Naive thymus-derived CD4-positive, alpha-beta T cell (primary cell): ENCODE measurements at regions of chr2 and their contacts with region 1.

Region 1: DNA sequence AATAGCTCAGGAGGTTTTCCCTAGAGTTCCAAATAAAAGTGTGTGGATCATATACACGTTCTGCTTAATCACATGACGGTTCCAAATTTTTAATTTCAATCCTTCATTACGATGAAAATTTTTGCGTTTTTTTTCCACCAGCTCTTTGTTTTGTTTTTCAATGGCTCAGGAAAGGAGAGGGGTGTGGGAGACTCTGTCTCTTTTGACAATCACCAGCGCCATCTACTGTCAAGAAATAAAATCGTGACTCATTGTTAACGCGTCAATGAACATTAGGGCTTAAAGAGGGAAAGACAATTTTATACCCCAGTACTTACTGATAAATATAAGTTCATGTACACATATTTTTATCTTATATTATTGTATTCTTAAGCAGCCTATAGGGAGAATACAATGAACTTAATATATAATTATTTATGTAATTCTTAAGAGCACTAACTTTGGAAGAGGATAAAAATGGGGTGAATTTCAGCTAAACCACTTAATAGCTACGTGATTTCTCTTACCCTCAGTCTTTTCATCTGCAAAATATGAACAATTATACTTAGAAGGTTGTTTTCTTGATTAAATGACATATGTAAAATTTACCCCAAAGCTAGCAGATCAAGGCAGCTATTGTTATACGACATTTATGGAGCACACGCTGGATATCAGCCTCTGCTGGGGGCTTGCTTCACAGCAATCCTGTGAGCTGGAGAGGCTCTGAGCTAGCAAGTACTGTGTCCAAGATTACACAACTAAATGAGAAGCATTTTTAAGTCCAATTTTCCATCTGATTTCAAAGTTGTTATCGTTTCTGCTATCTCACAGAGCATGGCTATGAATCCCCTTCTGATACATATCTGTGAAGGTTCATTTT is 47.4 kb upstream of the RMDN2 start:
- DNase-seq: peak in 7 of 9 donors; percentile 15 to 60 (median 48)
- ATAC-seq: peak; percentile 81
- H3K4me3 ChIP-seq: no peak overlapping the region
- H3K4me3 Mint-ChIP-seq: no peak overlapping the region
- H3K27ac ChIP-seq: no peak overlapping the region
- H3K27ac Mint-ChIP-seq: no peak overlapping the region
- H3K4me1 ChIP-seq: no peaks in the 10 kb centered on the region
- H3K4me1 Mint-ChIP-seq: peaks cover 0 to 8% (median 0%) of the 10 kb centered on the region in 7 donors
- H3K27me3 ChIP-seq: no peaks in the 10 kb centered on the region
- H3K27me3 Mint-ChIP-seq: peaks cover 9 to 30% (median 18%) of the 10 kb centered on the region in 5 donors

Region 2: DNA sequence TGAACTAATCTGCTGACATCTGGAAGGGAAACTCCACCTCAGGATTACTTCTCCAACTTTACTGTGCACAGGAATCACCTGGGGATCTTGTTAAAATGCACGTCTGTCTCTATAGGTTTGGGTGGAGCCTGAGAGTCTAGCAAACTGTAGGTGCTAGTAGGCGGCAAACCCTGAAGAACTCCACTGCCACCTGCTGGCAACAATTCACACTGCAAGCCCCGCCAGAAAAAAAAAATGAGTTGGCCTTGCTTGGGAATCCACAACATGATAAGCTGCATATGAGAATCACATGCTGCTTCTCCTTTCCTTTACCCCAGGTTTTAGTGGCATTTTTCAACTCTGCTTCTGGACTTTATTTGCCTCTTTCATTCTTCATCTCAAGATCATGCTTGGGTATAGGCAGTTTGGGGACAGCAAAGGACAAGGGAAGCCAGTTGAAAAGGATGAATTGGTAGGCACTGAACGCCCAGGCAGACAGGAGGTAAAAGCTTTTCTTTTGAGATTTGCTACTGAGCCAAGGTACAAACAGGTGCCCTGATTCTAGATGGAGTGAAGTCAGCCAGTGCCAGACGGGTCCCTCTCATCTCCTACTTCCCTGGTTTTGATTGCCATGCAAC is 1092.4 kb before region 1 on chr2:
- CTCF ChIA-PET with region 1: interaction called, 3 read pairs
- POLR2A ChIA-PET with region 1: no interaction called
- intact Hi-C with region 1: loop called (anchors 1 to 5 kb)
- DNase-seq: peak; percentile 23 to 74 (median 61)
- ATAC-seq: peak; percentile 85
- H3K4me3 ChIP-seq: no peak overlapping the region
- H3K4me3 Mint-ChIP-seq: no peak overlapping the region
- H3K27ac ChIP-seq: no peak overlapping the region
- H3K27ac Mint-ChIP-seq: peak overlapping the region in 1 of 9 donors; percentile 43
- H3K4me1 ChIP-seq: no peaks in the 10 kb centered on the region
- H3K4me1 Mint-ChIP-seq: peaks cover 0 to 15% (median 2%) of the 10 kb centered on the region in 7 donors
- H3K27me3 ChIP-seq: no peaks in the 10 kb centered on the region
- H3K27me3 Mint-ChIP-seq: peaks cover 0 to 37% (median 5%) of the 10 kb centered on the region in 5 donors

Region 3: DNA sequence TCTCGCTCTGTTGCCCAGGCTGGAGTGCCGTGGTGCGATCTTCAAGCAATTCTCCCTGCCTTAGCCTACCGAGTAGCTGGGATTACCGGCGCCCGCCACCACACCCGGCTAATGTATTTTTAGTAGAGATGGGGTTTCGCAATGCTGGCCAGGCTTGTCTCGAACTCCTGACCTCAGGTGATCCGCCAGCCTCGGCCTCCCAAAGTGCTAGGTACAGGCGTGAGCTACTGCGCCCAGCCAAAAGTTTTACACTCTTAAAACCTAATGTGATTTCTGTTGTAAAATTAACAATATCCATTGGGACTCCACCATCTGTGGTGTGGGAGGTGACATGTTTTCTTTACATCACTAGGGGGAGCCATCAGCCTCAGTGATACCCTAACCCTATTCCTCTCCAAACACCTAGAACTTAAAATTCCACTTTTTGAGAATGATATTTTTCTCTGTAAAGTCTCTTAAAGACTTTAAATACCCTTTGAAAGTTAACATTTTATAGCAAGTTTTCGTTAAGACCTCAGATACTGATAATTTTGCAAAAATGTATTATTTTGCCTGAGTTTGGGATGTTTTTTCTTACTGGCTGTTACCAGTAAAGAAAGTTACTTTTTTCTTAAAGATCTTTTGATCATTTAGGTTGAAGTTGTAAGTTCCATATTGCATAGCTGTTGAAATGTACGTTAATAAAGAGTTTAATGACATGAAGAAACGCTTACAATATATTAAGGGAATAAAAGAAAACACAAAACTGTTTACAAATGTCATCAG is 709.3 kb before region 1 on chr2:
- CTCF ChIA-PET with region 1: interaction called, 6 read pairs
- POLR2A ChIA-PET with region 1: interaction called, 3 read pairs
- intact Hi-C with region 1: loop called (anchors 1 kb)
- DNase-seq: peak in 6 of 9 donors; percentile 14 to 52 (median 40)
- ATAC-seq: peak; percentile 80
- H3K4me3 ChIP-seq: no peak overlapping the region
- H3K4me3 Mint-ChIP-seq: no peak overlapping the region
- H3K27ac ChIP-seq: no peak overlapping the region
- H3K27ac Mint-ChIP-seq: peak overlapping the region in 1 of 9 donors; percentile 32
- H3K4me1 ChIP-seq: no peaks in the 10 kb centered on the region
- H3K4me1 Mint-ChIP-seq: no peaks in the 10 kb centered on the region
- H3K27me3 ChIP-seq: no peaks in the 10 kb centered on the region
- H3K27me3 Mint-ChIP-seq: peaks cover 0 to 3% (median 0%) of the 10 kb centered on the region in 5 donors

Region 4: DNA sequence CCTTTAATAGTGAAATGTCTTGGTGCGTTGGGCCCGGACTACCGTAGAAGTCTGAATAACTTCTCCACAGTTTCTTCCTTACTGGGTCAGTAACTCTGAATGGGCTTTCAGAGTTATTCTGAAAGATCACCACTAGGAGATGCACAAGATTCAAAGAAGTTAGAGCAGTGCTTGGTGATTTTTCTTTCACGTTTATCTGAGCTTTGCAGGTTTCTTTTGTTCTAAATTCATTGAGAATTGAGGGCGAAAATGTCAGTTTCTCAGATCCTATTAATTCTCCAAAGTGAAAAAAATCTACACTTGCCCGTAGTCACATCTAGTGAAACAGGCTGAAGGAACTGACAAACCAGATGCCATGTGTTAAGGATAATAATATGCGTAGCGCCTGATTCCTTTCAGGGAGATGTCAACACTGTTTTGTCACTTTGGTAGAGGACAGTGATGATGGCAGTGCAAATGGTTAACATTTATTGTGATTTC is 463.2 kb before region 1 on chr2:
- CTCF ChIA-PET with region 1: interaction called, 23 read pairs
- POLR2A ChIA-PET with region 1: no interaction called
- intact Hi-C with region 1: loop called (anchors 1 kb)
- DNase-seq: peak in 6 of 9 donors; percentile 28 to 63 (median 57)
- ATAC-seq: peak; percentile 85
- H3K4me3 ChIP-seq: no peak overlapping the region
- H3K4me3 Mint-ChIP-seq: no peak overlapping the region
- H3K27ac ChIP-seq: no peak overlapping the region
- H3K27ac Mint-ChIP-seq: no peak overlapping the region
- H3K4me1 ChIP-seq: no peaks in the 10 kb centered on the region
- H3K4me1 Mint-ChIP-seq: peaks cover 0 to 7% (median 5%) of the 10 kb centered on the region in 7 donors
- H3K27me3 ChIP-seq: no peaks in the 10 kb centered on the region
- H3K27me3 Mint-ChIP-seq: peaks cover 0 to 17% (median 0%) of the 10 kb centered on the region in 5 donors

Region 5: DNA sequence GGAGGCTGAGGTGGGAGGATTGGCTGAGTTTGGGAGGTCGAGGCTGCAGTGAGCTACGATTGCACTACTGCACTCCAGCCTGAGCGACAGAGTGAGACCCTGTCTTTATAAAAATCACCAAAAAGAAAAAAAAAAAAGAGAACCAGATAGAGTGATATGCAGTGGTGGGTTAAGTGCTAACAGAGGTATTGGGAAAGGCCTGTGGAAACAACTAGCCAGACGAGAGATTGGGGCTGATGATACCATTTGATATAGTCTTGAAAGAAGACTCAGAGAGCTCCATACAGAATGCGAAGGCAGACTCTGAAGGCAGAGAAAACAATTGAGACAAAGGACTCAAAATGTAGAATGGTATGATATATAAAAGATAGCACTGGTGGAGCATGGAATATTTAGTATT is 340.4 kb before region 1 on chr2:
- CTCF ChIA-PET with region 1: no interaction called
- POLR2A ChIA-PET with region 1: no interaction called
- intact Hi-C with region 1: loop called (anchors 2 to 5 kb)
- DNase-seq: no peak
- ATAC-seq: no peak
- H3K4me3 ChIP-seq: no peak overlapping the region
- H3K4me3 Mint-ChIP-seq: no peak overlapping the region
- H3K27ac ChIP-seq: no peak overlapping the region
- H3K27ac Mint-ChIP-seq: no peak overlapping the region
- H3K4me1 ChIP-seq: no peaks in the 10 kb centered on the region
- H3K4me1 Mint-ChIP-seq: peaks cover 0 to 5% (median 3%) of the 10 kb centered on the region in 7 donors
- H3K27me3 ChIP-seq: no peaks in the 10 kb centered on the region
- H3K27me3 Mint-ChIP-seq: peaks cover 0 to 28% (median 0%) of the 10 kb centered on the region in 5 donors

Region 6: GRCh38 chr2:37890893-37891495 is 13.3 kb after region 1 on chr2:
- CTCF ChIA-PET with region 1: interaction called, 13 read pairs
- POLR2A ChIA-PET with region 1: no interaction called
- intact Hi-C with region 1: no loop called
- DNase-seq: peak; percentile 17 to 63 (median 44)
- ATAC-seq: peak; percentile 72
- H3K4me3 ChIP-seq: no peak overlapping the region
- H3K4me3 Mint-ChIP-seq: peak overlapping the region in 6 of 10 donors; percentile 12 to 75 (median 55)
- H3K27ac ChIP-seq: no peak overlapping the region
- H3K27ac Mint-ChIP-seq: peak overlapping the region in 2 of 9 donors; percentile 35 to 71
- H3K4me1 ChIP-seq: peaks cover 25 to 33% of the 10 kb centered on the region in 2 donors
- H3K4me1 Mint-ChIP-seq: peaks cover 24 to 58% (median 45%) of the 10 kb centered on the region in 7 donors
- H3K27me3 ChIP-seq: no peaks in the 10 kb centered on the region
- H3K27me3 Mint-ChIP-seq: peaks cover 0 to 29% (median 2%) of the 10 kb centered on the region in 5 donors

Region 7: DNA sequence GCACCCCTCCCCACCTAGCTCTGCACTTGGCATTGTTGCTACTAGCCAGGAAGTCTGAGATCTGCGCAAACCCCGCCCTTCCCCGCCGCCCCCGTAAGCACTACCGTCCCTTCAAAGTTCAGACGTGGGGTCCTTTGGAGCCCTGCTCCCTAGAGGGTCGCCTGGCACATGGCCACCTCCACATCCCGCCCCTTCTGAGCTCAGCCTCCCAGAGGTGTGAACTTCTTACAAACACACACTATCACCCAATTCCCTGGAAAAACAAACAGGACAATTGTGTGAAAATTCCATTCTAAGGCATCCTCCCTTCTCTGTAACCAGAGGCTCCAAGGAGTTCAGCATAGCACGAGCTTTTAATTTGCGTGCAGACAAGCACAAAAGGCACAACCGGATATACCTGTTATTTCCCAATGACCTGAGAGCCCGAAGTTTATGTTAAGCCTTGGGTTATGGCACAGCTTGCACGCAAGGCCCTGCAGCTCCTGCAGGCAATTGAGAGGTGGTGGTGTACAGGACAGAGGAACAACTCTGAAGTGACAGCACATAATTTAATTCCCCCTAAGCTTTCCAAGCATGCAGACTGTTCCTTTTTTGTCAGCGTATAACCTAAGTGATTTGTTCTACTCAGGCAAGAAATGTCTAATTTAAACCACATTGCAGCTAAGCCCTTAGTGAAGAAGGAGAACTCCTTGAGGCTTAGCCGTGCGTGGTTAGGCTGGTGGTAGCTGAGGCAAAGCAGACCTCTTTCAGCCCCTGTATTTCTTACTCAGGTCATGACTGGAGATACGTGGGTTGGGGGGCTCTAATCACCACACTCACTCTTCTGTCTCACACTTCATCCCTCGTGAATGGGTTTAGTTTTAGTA is 218.5 kb after region 1 on chr2:
- CTCF ChIA-PET with region 1: no interaction called
- POLR2A ChIA-PET with region 1: no interaction called
- intact Hi-C with region 1: no loop called
- DNase-seq: no peak
- ATAC-seq: peak; percentile 38
- H3K4me3 ChIP-seq: no peak overlapping the region
- H3K4me3 Mint-ChIP-seq: peak overlapping the region in 2 of 10 donors; percentile 10 to 33
- H3K27ac ChIP-seq: no peak overlapping the region
- H3K27ac Mint-ChIP-seq: peak overlapping the region in 1 of 9 donors; percentile 16
- H3K4me1 ChIP-seq: no peaks in the 10 kb centered on the region
- H3K4me1 Mint-ChIP-seq: peaks cover 0 to 32% (median 8%) of the 10 kb centered on the region in 7 donors
- H3K27me3 ChIP-seq: peaks cover 5 to 9% of the 10 kb centered on the region in 2 donors
- H3K27me3 Mint-ChIP-seq: peaks cover 53 to 88% (median 71%) of the 10 kb centered on the region in 5 donors